Activated CD4-positive, alpha-beta T cell treated with anti-CD3 and anti-CD28 coated beads, Interleukin-2, amount 10 ng/mL, durations not matched to agents 7 days and 5 days (primary cell): ENCODE measurements at regions of chr1 and their contacts with region 1.

Region 1: GRCh38 chr1:205301842-205302588 is 19.5 kb downstream of the NUAK2 start:
- DNase-seq: no peak
- H3K4me3 Mint-ChIP-seq: no peak overlapping the region
- H3K27ac Mint-ChIP-seq: no peak overlapping the region
- H3K4me1 Mint-ChIP-seq: peaks cover 20% of the 10 kb centered on the region
- H3K27me3 Mint-ChIP-seq: no peaks in the 10 kb centered on the region

Region 2: DNA sequence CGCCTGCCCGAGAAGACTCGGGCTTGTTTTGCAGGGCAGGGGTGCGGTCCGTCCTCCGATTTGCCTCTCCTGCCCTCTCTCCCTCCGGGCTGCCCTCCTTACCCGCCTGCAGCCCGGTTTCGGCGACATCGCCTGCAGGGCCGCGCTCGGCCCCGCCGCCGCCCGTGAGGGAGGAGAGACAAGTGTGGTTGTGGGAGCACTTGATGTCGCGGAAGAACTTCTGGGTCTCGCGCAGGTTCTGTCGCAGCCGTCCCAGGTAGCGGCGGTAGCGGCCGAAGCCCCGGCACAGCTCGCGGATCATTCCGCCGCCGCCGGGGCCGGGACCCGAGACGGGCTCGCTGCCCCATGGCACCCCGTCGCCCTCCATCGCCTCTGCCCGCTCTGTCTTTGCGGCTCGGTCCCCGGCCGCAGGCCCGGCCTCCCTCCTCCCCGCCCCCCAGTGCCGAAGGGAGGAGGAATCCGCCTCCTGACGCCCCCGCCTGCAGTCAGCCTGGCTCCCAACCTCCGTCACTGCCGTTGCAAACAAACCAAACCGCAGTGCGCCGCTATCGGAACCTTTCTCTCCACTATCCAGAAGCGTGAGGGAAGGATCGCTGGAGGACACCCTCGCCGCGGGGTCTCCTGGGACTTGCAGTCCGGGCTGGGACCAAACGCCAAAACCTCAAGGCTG is 90.7 kb before region 1 on chr1 and contains the start of gene DSTYK:
- CTCF ChIA-PET with region 1: no interaction called
- POLR2A ChIA-PET with region 1: no interaction called
- DNase-seq: peak; percentile 93
- H3K4me3 Mint-ChIP-seq: peak within 1 kb of the TSS; percentile 94
- H3K27ac Mint-ChIP-seq: peak within 1 kb of the TSS; percentile 93
- H3K4me1 Mint-ChIP-seq: peaks cover 49% of the 10 kb centered on the region
- H3K27me3 Mint-ChIP-seq: no peaks in the 10 kb centered on the region
- total RNA-seq, gene DSTYK: 8.8 to 8.9 TPM

Region 3: GRCh38 chr1:205284343-205285144 is 17.5 kb before region 1 on chr1:
- CTCF ChIA-PET with region 1: interaction called, 18 read pairs
- POLR2A ChIA-PET with region 1: no interaction called
- DNase-seq: peak; percentile 94
- H3K4me3 Mint-ChIP-seq: peak overlapping the region; percentile 53
- H3K27ac Mint-ChIP-seq: peak overlapping the region; percentile 92
- H3K4me1 Mint-ChIP-seq: peaks cover 86% of the 10 kb centered on the region
- H3K27me3 Mint-ChIP-seq: peaks cover 9% of the 10 kb centered on the region